WTC11 (cell line): ENCODE measurements at regions of chr11 and their contacts with region 1.

Region 1: DNA sequence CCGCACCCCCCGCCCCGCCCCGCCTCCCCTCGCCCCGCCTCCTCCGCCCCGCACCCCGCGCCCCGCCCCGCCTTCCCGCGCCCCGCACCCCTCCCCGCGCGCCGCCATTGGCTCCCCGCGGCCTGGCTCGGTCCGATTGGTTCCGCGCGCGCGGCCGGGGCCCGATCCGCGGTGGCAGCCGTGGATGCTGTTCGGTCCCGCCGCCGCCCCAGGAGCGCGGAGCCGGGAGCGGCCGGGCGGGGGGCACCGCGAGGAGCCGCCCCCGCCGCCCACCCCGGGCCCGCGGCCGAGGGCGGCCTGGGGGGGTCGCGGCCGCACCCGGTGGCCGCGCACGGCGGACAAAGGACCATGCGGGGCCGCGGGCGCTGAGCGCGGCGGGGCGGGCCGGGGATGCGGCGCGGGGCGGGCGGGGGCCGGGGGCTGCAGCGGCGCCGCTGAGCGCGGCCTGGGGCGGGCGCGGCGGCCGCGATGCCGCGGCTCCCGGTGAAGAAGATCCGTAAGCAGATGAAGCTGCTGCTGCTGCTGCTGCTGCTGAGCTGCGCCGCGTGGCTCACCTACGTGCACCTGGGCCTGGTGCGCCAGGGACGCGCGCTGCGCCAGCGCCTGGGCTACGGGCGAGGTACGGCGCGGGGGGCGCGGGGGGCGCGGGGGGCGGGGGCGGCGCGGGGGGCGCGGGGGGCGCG is at the start of gene B4GALNT4:
- DNase-seq: peak; percentile 40
- ATAC-seq: peak; percentile 3; the same call in 1 of the 2 replicates
- H3K4me3 Mint-ChIP-seq: peak within 1 kb of the TSS; percentile 88
- H3K27ac Mint-ChIP-seq: peak within 1 kb of the TSS; percentile 87
- H3K4me1 Mint-ChIP-seq: peaks cover 24% of the 10 kb centered on the region
- H3K27me3 Mint-ChIP-seq: peaks cover 8% of the 10 kb centered on the region
- CTCF ChIP-seq: no peak
- total RNA-seq, gene B4GALNT4: 88.0 to 113 TPM (median 97.8 TPM) in 3 replicates

Region 2: DNA sequence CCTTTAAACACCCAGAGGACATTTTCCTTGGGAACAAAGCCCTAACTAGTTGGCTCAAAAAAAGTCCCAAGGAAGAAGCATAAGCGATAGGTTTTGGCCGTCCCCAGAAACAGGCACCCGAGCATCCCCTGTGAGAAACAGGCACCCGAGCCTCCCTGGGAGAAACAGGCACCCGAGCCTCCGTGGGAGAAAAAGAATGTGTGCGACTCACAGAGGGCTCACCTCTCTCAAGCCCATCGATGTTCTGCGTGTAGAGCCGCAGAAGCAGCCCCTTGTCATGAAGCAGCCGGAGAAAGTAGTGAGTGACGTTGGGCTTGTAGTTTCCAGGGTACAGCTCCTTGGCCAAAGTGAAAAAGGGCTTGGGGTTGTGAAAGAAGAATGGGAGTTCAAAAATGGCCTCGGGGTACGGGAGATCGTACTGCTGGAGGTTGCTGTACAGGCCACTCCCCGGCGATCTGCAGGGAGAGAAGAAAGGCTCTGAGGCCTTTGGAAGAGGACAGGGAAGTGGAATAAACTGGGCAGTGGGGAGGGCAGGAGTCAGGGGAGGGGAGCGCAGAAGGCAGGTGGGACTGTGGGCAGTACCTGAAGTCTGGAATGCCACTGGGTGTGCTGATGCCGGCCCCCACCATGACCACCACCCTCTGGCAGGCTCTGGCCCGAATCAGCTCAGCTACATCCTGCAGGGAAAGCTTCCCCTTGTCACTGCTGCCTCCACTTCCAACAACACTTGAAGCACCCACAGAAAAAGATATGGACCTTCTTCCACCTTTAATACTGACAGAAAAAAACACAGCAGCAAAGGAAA is 136.5 kb before region 1 on chr11:
- CTCF ChIA-PET with region 1: no interaction called
- POLR2A ChIA-PET with region 1: no interaction called
- DNase-seq: no peak
- ATAC-seq: no peak
- H3K4me3 Mint-ChIP-seq: no peak overlapping the region
- H3K27ac Mint-ChIP-seq: no peak overlapping the region; the same call in 1 of the 2 replicates
- H3K4me1 Mint-ChIP-seq: peaks cover 11% of the 10 kb centered on the region
- H3K27me3 Mint-ChIP-seq: no peaks in the 10 kb centered on the region
- CTCF ChIP-seq: no peak

Region 3: GRCh38 chr11:390175-390574 is 20.7 kb after region 1 on chr11:
- CTCF ChIA-PET with region 1: interaction called, 12 read pairs
- POLR2A ChIA-PET with region 1: no interaction called
- DNase-seq: peak; percentile 80
- ATAC-seq: peak; percentile 52
- H3K4me3 Mint-ChIP-seq: no peak overlapping the region
- H3K27ac Mint-ChIP-seq: no peak overlapping the region
- H3K4me1 Mint-ChIP-seq: peaks cover 6% of the 10 kb centered on the region
- H3K27me3 Mint-ChIP-seq: peaks cover 17% of the 10 kb centered on the region
- CTCF ChIP-seq: peak; percentile 27; the same call in 1 of the 2 replicates